ENCODE measurements at regions of chr2 and their contacts with region 1.

Region 1: GRCh38 chr2:96951093-96951654 is 35.2 kb downstream of the FAM178B start:
- DNase-seq: peak; percentile 75 to 90
- H3K4me3 ChIP-seq: no peak overlapping the region
- H3K27ac ChIP-seq: no peak overlapping the region
- H3K4me1 ChIP-seq: peaks cover 0 to 5% (median 2%) of the 10 kb centered on the region in 4 experiments; a peak in 4 of 7 replicates
- H3K27me3 ChIP-seq: peaks cover 0 to 5% (median 1%) of the 10 kb centered on the region in 4 experiments; a peak in 3 of 7 replicates
- CTCF ChIP-seq: peak; percentile 96 to 99 (median 96)
- EP300 ChIP-seq: no peak
- POLR2A ChIP-seq: no peak
- RAD21 ChIP-seq: peak; percentile 97 to 99

Region 2: GRCh38 chr2:96839293-96839874 is 111.8 kb before region 1 on chr2:
- CTCF ChIA-PET with region 1: interaction called, 10 read pairs
- POLR2A ChIA-PET with region 1: interaction called, 3 read pairs
- DNase-seq: peak in 1 of 2 experiments; percentile 64
- H3K4me3 ChIP-seq: no peak overlapping the region
- H3K27ac ChIP-seq: no peak overlapping the region
- H3K4me1 ChIP-seq: peaks cover 0 to 3% (median 0%) of the 10 kb centered on the region in 4 experiments; a peak in 1 of 7 replicates
- H3K27me3 ChIP-seq: no peaks in the 10 kb centered on the region
- CTCF ChIP-seq: no peak
- EP300 ChIP-seq: no peak
- POLR2A ChIP-seq: peak in 1 of 2 experiments; percentile 8; a peak in 1 of 3 replicates
- RAD21 ChIP-seq: no peak

Region 3: DNA sequence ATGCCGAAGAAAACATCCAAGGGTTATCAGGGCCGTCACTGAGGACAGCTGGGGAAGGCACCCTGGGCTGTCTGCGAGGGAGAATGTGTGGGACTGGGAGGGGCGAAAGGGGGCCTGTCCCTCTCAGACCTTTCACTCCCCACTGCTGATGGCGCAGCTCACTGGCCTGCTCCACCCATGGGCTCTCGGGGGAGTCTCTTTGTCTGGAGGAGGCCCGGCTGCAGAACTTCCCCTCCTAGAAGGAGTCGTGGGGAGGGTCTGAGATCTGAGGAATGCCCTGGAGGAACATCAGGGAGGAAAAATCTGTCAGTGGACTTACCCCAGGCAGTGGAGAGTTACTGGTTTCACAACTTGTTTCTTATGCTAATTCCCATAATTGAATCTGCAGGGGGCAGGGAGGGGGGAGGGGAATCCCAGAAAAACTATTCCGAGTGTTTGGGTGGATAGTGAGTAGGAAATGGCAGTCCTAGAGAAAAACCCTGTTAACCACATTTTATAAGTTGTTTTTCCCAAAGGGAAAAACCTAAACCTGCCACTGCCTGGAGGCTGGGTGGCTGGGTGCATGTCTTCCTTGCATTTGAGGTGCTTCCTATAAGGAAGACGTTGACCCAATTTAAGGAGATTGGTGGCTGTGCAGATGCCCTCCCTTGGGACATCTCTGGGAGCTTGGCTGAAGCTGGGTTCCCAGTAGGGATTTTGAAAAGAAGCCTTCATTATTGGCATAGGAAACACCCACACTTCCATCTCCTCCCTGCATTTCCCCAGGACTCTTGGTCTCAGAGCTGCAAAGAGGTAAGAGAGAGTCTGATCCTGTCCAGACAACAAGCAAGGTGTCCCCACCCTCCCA is 69.6 kb before region 1 on chr2:
- CTCF ChIA-PET with region 1: interaction called, 19 read pairs
- POLR2A ChIA-PET with region 1: interaction called, 3 read pairs
- DNase-seq: peak in 1 of 2 experiments; percentile 53
- H3K4me3 ChIP-seq: peak overlapping the region in 2 of 4 experiments; percentile 7 to 36; a peak in 4 of 8 replicates
- H3K27ac ChIP-seq: 0 out of 2 replicates have a peak overlapping the region, but pooled peaks have one; percentile 8
- H3K4me1 ChIP-seq: peaks cover 3 to 27% (median 15%) of the 10 kb centered on the region in 4 experiments
- H3K27me3 ChIP-seq: peaks cover 0 to 2% (median under 1%) of the 10 kb centered on the region in 4 experiments; a peak in 2 of 7 replicates
- CTCF ChIP-seq: no peak
- EP300 ChIP-seq: no peak
- POLR2A ChIP-seq: no peak
- RAD21 ChIP-seq: no peak

Region 4: DNA sequence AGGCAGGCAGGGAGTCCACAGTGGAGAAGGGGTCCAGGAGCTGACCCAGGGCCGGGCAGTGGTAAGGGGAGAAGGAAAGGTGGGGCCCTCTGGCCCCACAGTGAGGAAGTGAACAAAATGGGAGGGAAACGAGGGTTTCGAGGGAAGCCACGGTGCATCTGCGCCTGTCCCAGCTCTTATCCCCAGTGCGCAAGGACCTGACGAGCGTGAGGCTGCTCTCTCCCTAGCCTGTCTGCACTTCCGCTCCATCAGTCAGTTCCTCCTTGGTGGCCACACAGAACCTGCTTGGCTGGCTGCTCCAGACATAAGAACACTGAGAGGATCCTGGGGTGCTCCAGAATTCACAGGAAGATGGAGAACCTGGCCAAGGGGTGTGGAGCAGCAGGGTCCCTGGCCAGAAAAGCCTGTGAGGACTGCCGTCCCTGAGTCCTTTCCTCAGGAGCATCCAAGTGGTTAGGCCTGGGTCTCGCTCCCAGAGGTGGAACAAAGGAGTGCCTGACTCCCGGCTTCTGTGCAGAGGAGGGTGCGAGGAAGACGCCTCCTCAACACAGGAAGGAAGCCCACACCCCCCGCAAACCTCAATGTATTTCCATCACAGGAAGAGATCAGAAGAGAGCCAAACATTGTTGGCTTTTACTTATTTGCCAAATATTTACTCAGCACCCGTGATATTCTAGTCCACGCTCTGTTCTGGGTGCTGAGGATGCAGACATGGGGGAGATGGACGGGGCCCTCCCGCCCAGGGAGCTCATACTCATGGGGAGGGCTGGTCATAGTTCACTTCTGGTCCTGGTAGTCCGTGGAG is 37.6 kb before region 1 on chr2:
- CTCF ChIA-PET with region 1: interaction called, 15 read pairs
- POLR2A ChIA-PET with region 1: no interaction called
- DNase-seq: no peak
- H3K4me3 ChIP-seq: no peak overlapping the region
- H3K27ac ChIP-seq: no peak overlapping the region
- H3K4me1 ChIP-seq: peaks cover 0 to 16% (median 10%) of the 10 kb centered on the region in 4 experiments; a peak in 5 of 7 replicates
- H3K27me3 ChIP-seq: peaks cover 0 to 2% (median 0%) of the 10 kb centered on the region in 4 experiments; a peak in 2 of 7 replicates
- CTCF ChIP-seq: no peak
- EP300 ChIP-seq: no peak
- POLR2A ChIP-seq: no peak
- RAD21 ChIP-seq: no peak

Region 5: GRCh38 chr2:96927405-96928243 is 23.6 kb before region 1 on chr2:
- CTCF ChIA-PET with region 1: interaction called, 41 read pairs
- POLR2A ChIA-PET with region 1: no interaction called
- DNase-seq: no peak
- H3K4me3 ChIP-seq: no peak overlapping the region
- H3K27ac ChIP-seq: no peak overlapping the region
- H3K4me1 ChIP-seq: peaks cover 0 to 3% (median 0%) of the 10 kb centered on the region in 4 experiments; a peak in 2 of 7 replicates
- H3K27me3 ChIP-seq: peaks cover 0 to 3% (median 1%) of the 10 kb centered on the region in 4 experiments; a peak in 1 of 7 replicates
- CTCF ChIP-seq: peak; percentile 16 to 20 (median 20); a peak in 2 of 4 replicates
- EP300 ChIP-seq: no peak
- POLR2A ChIP-seq: no peak
- RAD21 ChIP-seq: peak in 1 of 2 experiments; percentile 30; a peak in 1 of 4 replicates

Region 6: DNA sequence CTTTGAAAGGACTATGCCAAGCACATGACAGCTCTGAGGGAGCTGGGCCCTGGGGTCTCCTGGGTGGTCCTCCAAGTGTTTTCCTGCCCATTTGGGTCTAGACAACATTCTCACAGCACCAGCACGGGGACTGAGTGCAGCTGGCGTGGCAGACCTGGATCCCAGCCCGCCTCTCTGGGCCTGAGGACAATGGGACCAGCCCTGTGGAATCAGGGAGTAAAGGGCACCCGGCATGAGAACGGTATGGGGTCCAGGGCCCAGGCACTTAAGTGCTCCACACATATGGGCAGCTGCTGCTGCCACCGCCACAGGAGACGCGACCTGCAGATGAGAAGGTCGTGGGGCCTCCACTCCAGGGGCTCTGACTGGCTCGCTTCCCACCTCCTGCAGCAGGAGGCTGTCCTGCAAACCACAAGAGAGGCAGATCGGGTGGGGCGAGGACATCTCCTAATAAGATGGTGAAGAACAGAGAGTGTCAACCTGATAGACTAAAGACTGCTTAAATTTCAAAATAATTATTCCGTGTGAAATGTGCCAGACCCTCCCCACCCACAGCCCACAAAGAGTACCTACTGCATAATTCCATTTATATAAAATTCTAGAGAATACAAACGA is 11.1 kb before region 1 on chr2:
- CTCF ChIA-PET with region 1: interaction called, 58 read pairs
- POLR2A ChIA-PET with region 1: interaction called, 4 read pairs
- DNase-seq: no peak
- H3K4me3 ChIP-seq: no peak overlapping the region
- H3K27ac ChIP-seq: no peak overlapping the region
- H3K4me1 ChIP-seq: peaks cover 0 to 3% (median 1%) of the 10 kb centered on the region in 4 experiments; a peak in 2 of 7 replicates
- H3K27me3 ChIP-seq: no peaks in the 10 kb centered on the region
- CTCF ChIP-seq: no peak
- EP300 ChIP-seq: no peak
- POLR2A ChIP-seq: no peak
- RAD21 ChIP-seq: no peak

Region 7: DNA sequence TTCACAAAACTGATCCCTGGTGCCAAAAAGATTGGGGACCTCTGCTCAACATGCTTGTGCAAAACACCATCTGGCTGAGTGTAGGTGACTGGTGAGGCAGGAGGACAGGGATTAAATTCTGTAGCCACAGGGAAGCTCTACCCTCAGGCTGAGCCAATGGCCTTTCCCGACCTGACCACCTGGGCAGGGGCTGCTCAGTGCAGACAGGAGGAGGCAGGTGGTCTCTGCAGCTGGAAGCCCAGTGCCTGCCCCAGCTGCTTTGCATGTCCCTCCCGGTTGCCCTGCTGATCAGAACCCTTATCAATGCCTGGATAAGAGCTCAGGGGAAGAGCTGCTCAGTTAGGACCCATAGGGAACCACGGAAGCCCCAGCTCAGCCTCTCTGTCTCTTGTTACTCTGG is 397.1 kb after region 1 on chr2:
- CTCF ChIA-PET with region 1: no interaction called
- POLR2A ChIA-PET with region 1: no interaction called
- DNase-seq: peak in 1 of 2 experiments; percentile 49
- H3K4me3 ChIP-seq: no peak overlapping the region
- H3K27ac ChIP-seq: no peak overlapping the region
- H3K4me1 ChIP-seq: peaks cover 0 to 3% (median 2%) of the 10 kb centered on the region in 4 experiments; a peak in 4 of 7 replicates
- H3K27me3 ChIP-seq: no peaks in the 10 kb centered on the region
- CTCF ChIP-seq: no peak
- EP300 ChIP-seq: no peak
- POLR2A ChIP-seq: no peak
- RAD21 ChIP-seq: no peak

Measured in H1 (cell line).